Heart left ventricle (tissue), 16 donors: ENCODE measurements at regions of chr12 and their contacts with region 1.

Region 1: GRCh38 chr12:112992541-112993398 is 14.5 kb downstream of the OAS2 start:
- DNase-seq: peak in 2 of 5 donors; percentile 50 to 54
- ATAC-seq: peak in 3 of 4 donors; percentile 58 to 70 (median 59)
- H3K4me3 ChIP-seq: no peak overlapping the region
- H3K27ac ChIP-seq: no peak overlapping the region
- H3K4me1 ChIP-seq: peaks cover 0 to 6% (median 0%) of the 10 kb centered on the region in 12 donors
- H3K27me3 ChIP-seq: no peaks in the 10 kb centered on the region
- CTCF ChIP-seq: peak; percentile 63 to 89 (median 82)
- POLR2A ChIP-seq: no peak

Region 2: DNA sequence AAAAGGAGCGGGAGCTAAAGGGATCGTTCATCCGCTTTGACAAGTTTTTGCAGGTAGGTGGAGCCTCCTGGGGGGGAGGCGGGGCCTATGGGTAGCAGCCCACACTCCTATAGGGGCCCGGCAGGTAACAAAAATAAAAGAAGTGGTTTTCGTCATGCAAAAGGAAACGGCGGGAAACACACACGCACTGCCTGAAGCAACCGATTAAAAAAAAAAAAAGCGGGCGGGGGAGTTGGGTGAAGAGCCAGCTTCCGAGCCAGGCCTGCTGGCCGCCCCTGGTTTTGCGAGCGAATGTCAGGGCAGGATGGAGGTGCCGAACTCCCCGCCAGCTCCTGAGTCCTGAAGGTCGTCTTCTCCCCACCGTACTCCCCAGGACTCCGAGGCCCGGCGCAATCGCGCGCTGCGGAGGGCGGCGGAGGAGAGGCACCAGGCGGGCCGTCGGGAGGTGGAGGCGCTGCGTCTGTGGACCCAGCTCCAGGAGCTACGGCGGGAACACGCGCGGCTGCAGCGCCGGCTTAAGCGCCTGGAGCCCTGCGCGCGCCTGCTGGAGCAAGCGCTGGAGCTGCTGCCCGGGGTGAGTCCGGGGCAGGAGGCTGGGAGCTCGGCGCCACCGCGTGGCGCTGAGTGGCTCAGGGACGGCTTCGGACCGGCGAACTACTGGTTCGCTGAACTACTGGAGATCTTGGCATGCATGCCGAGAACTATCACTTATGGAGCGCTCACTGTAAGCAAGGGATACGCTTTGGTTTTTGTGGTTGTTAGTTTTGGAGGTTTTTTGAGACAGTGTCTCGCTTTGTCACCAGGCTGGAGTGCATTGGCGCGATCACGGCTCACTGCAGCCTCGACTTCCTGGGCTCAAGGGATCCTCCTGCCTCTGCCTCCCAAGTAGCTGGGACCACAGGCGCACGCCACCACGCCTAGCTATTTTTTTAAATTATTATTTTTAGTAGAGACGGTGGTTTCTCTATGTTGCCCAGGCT is 160.4 kb after region 1 on chr12:
- intact Hi-C with region 1: loop called in 1 of 10 experiments (anchors 5 kb)
- DNase-seq: peak; percentile 59 to 81 (median 65)
- ATAC-seq: peak; percentile 59 to 86 (median 86)
- H3K4me3 ChIP-seq: peak overlapping the region in 11 of 12 donors; percentile 24 to 56 (median 38)
- H3K27ac ChIP-seq: no peak overlapping the region
- H3K4me1 ChIP-seq: peaks cover 0 to 33% (median 13%) of the 10 kb centered on the region in 12 donors
- H3K27me3 ChIP-seq: peaks cover 6 to 66% (median 47%) of the 10 kb centered on the region in 9 donors
- CTCF ChIP-seq: peak; percentile 13 to 65 (median 47)
- POLR2A ChIP-seq: no peak